CD8-positive, alpha-beta T cell (primary cell): ENCODE measurements at regions of chr1 and their contacts with region 1.

Region 1: DNA sequence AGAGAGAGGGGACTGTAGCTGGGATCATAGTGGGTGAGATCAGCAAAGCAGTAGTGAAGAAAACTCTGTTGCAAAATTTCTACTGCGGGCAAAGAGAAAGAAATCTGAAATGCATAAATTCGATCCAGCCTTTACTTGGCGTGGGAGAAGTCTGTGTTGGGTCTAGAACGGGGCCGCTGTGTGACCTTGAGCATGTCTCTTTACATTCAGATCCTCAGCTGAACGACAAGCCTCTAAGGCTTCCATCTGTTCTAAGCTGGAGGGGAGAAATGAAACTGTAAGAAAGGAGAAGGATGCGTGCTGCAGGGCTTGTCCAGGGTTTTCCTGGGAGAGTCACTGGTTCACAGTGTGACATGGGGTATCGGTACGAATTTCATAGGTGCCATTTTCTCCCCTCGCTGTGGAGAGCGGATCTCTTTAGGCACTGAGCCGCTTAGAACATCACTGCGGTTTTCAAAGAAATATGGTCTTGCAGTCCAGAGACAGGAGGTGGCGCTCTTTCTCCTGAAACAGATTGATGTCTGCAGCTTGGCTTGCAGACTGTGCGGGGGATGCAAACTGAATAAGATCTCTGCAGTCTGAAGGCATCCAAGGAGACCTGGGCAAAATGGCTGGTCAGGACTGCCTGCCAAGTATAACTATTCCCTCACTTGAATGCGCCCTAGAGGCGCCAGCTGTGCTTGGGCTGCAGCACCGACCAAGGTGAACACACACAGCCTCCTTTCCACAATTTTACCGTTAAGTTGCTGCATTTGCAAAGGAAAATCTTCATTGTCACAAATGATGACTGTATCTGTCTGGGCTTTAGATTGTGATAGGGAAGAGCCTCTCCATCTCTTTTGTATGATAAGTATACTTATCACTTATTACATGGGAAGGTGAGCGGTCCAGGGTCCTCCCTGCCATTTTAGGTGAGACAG is 104.1 kb downstream of the XCL2 start:
- DNase-seq: peak; percentile 69 to 92 (median 84)
- ATAC-seq: peak; percentile 88
- H3K4me3 ChIP-seq: peak overlapping the region; percentile 21 to 29
- H3K4me3 Mint-ChIP-seq: peak overlapping the region; percentile 83
- H3K27ac ChIP-seq: peak overlapping the region in 1 of 2 experiments; percentile 53
- H3K27ac Mint-ChIP-seq: peak overlapping the region; percentile 90
- H3K4me1 ChIP-seq: peaks cover 46% of the 10 kb centered on the region
- H3K4me1 Mint-ChIP-seq: peaks cover 58% of the 10 kb centered on the region
- H3K27me3 ChIP-seq: no peaks in the 10 kb centered on the region
- H3K27me3 Mint-ChIP-seq: no peaks in the 10 kb centered on the region
- CTCF ChIP-seq: peak; percentile 70

Region 2: DNA sequence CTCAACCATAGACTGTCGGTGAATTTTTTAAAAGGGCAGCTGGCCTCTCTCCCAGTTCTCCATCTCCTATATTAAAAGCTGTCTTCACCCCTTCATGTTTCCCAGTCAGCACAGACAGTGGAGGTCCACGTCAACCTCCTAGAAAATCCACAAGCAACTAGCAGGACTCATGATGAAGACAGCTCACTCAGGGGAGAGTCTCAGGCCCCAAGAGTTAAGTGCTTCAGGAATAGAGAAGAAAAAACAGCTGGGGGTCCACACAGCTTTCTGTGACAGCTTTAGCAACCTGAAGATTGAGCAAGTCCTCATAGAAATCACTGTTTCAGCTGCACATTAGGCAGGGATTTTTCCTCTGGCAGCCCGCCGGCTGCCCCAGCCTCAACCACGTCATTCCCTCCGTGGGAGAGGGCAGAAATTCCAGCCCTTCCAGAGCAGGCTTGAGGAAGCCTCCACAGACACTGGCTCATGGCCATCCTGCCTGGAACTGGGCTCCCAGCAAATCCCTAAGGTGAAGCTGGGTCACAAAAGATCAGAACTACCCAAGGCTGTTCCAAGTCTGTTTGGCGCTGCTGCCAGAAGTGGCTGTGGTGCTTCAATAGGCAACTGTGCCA is 318.2 kb before region 1 on chr1:
- CTCF ChIA-PET with region 1: no interaction called
- POLR2A ChIA-PET with region 1: no interaction called
- intact Hi-C with region 1: no loop called
- DNase-seq: no peak
- ATAC-seq: no peak
- H3K4me3 ChIP-seq: no peak overlapping the region
- H3K4me3 Mint-ChIP-seq: no peak overlapping the region
- H3K27ac ChIP-seq: no peak overlapping the region
- H3K27ac Mint-ChIP-seq: no peak overlapping the region
- H3K4me1 ChIP-seq: no peaks in the 10 kb centered on the region
- H3K4me1 Mint-ChIP-seq: no peaks in the 10 kb centered on the region
- H3K27me3 ChIP-seq: no peaks in the 10 kb centered on the region
- H3K27me3 Mint-ChIP-seq: peaks cover 33% of the 10 kb centered on the region
- CTCF ChIP-seq: no peak

Region 3: GRCh38 chr1:168360151-168361021 is 79.3 kb before region 1 on chr1:
- CTCF ChIA-PET with region 1: interaction called, 3 read pairs
- POLR2A ChIA-PET with region 1: no interaction called
- intact Hi-C with region 1: loop called in 1 of 2 experiments (anchors 2 kb)
- DNase-seq: peak in 3 of 9 experiments; percentile 14 to 52 (median 46)
- ATAC-seq: no peak
- H3K4me3 ChIP-seq: no peak overlapping the region
- H3K4me3 Mint-ChIP-seq: no peak overlapping the region
- H3K27ac ChIP-seq: no peak overlapping the region
- H3K27ac Mint-ChIP-seq: no peak overlapping the region
- H3K4me1 ChIP-seq: peaks cover 24% of the 10 kb centered on the region
- H3K4me1 Mint-ChIP-seq: peaks cover 33% of the 10 kb centered on the region
- H3K27me3 ChIP-seq: no peaks in the 10 kb centered on the region
- H3K27me3 Mint-ChIP-seq: no peaks in the 10 kb centered on the region
- CTCF ChIP-seq: no peak

Region 4: DNA sequence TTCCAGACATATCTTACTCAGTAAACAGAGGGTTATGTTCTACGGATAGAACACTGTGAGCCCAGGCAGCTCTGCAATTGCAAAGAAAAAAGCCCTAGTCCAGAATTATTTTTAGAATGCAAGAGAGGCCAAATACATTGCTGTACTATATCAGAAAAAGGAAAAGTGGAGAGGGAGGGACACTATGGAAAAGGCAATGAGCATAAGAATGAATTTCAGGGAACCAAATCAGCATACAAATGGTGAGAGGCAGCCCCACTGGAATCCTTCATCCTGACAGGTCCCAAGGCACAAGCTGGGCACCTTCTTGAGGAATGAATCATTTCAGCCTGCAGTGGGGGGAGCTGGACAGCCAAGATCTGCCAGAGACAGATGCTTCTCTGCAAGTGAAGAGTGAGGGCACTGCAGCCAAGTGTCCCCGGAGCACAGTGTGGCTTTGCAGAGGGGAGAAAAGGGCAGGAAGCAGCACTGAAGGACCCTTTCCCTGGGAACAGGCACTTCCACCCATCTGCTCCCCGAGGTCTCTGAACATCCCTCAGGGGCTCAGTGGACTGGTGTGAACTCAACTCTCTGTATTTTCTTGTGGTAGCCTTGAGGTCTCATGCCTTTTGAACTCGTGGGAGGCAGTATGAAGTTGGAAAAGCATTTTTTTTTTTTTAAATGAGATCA is 11.5 kb before region 1 on chr1:
- CTCF ChIA-PET with region 1: interaction called, 25 read pairs
- POLR2A ChIA-PET with region 1: no interaction called
- intact Hi-C with region 1: no loop called
- DNase-seq: no peak
- ATAC-seq: no peak
- H3K4me3 ChIP-seq: no peak overlapping the region
- H3K4me3 Mint-ChIP-seq: no peak overlapping the region
- H3K27ac ChIP-seq: no peak overlapping the region
- H3K27ac Mint-ChIP-seq: no peak overlapping the region
- H3K4me1 ChIP-seq: no peaks in the 10 kb centered on the region
- H3K4me1 Mint-ChIP-seq: peaks cover 3% of the 10 kb centered on the region
- H3K27me3 ChIP-seq: no peaks in the 10 kb centered on the region
- H3K27me3 Mint-ChIP-seq: no peaks in the 10 kb centered on the region
- CTCF ChIP-seq: no peak

Region 5: GRCh38 chr1:168509875-168510791 is 70.4 kb after region 1 on chr1:
- CTCF ChIA-PET with region 1: interaction called, 4 read pairs
- POLR2A ChIA-PET with region 1: interaction called, 5 read pairs
- intact Hi-C with region 1: loop called in 1 of 2 experiments (anchors 5 kb)
- DNase-seq: peak in 5 of 9 experiments; percentile 18 to 88 (median 63)
- ATAC-seq: peak; percentile 57
- H3K4me3 ChIP-seq: no peak overlapping the region
- H3K4me3 Mint-ChIP-seq: peak overlapping the region; percentile 4
- H3K27ac ChIP-seq: peak overlapping the region in 1 of 2 experiments; percentile 65
- H3K27ac Mint-ChIP-seq: peak overlapping the region; percentile 84
- H3K4me1 ChIP-seq: peaks cover 56% of the 10 kb centered on the region
- H3K4me1 Mint-ChIP-seq: peaks cover 72% of the 10 kb centered on the region
- H3K27me3 ChIP-seq: no peaks in the 10 kb centered on the region
- H3K27me3 Mint-ChIP-seq: no peaks in the 10 kb centered on the region
- CTCF ChIP-seq: no peak

Region 6: DNA sequence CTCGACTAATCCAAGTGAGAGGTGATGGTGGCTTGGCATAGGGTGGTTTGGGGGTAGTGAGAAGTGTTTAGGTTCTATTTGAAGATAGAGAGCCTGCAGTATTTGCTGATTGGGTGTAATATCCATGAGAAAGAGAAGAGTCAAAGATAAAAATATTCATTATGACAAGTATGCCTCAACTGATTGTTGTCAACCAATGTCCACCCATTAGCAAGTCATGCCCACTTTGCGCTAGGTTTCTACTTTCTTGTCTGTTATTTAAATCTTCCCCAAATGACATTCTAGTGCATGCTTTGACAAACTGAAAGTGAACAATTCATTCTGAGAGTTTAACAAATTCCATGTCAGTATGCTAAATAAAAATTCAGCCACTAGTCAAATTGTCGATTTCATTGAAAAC is 132.9 kb after region 1 on chr1:
- CTCF ChIA-PET with region 1: interaction called, 12 read pairs
- POLR2A ChIA-PET with region 1: interaction called, 6 read pairs
- intact Hi-C with region 1: loop called (anchors 1 kb)
- DNase-seq: no peak
- ATAC-seq: no peak
- H3K4me3 ChIP-seq: no peak overlapping the region
- H3K4me3 Mint-ChIP-seq: no peak overlapping the region
- H3K27ac ChIP-seq: no peak overlapping the region
- H3K27ac Mint-ChIP-seq: no peak overlapping the region
- H3K4me1 ChIP-seq: peaks cover 3% of the 10 kb centered on the region
- H3K4me1 Mint-ChIP-seq: peaks cover 26% of the 10 kb centered on the region
- H3K27me3 ChIP-seq: no peaks in the 10 kb centered on the region
- H3K27me3 Mint-ChIP-seq: no peaks in the 10 kb centered on the region
- CTCF ChIP-seq: no peak

Region 7: GRCh38 chr1:168879916-168880734 is 440.4 kb after region 1 on chr1:
- CTCF ChIA-PET with region 1: no interaction called
- POLR2A ChIA-PET with region 1: no interaction called
- intact Hi-C with region 1: loop called in 1 of 2 experiments (anchors 2 kb)
- DNase-seq: no peak
- ATAC-seq: no peak
- H3K4me3 ChIP-seq: no peak overlapping the region
- H3K4me3 Mint-ChIP-seq: no peak overlapping the region
- H3K27ac ChIP-seq: no peak overlapping the region
- H3K27ac Mint-ChIP-seq: no peak overlapping the region
- H3K4me1 ChIP-seq: no peaks in the 10 kb centered on the region
- H3K4me1 Mint-ChIP-seq: peaks cover 3% of the 10 kb centered on the region
- H3K27me3 ChIP-seq: no peaks in the 10 kb centered on the region
- H3K27me3 Mint-ChIP-seq: peaks cover 2% of the 10 kb centered on the region
- CTCF ChIP-seq: no peak

Region 8: DNA sequence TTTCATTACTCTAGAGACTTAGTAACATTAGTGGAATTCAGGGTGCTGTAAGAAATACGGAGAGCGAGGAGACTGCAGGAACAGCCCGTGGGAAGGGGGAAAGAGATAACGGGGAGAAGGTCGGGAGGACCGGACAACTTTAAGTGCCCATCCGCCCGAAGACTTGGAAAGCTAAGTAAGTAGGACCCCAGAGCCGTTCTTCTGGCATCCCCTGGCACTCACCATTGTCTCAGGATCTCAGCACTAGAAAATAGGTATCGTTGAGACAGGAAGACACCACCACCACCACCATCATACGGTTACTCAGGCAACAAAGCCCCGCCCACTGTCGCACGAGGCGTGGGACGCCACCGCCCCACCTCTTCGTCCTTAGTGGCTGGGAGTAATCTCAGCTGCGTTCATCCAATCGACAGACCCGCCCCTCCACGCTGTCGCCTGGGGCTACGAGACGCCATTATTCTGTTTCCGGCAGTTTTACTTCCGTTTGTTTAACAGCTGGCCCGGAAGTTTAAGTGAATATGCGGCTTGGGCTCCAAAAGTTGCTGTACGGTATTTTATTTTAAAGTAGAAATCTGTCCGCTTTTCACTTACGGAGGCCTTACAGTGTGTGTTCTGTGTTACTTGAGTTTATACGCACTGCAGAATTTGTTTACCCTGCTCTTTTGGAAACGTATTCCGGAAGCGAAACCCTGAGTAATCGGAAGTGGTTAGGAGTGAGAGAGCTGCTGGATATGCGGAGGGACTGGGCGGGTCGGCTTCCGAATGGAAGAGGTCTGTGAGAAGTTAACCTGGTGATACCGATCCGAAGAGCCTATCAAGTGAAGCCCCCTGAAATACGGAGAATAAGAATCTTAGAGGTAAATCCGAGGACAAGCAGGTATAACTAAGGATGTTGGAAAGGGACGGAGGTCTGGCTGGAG is 928.0 kb after region 1 on chr1 and contains the starts of genes BLZF1 and NME7:
- CTCF ChIA-PET with region 1: interaction called, 3 read pairs
- POLR2A ChIA-PET with region 1: no interaction called
- intact Hi-C with region 1: loop called in 1 of 2 experiments (anchors 5 kb)
- DNase-seq: peak; percentile 96 to 99 (median 98)
- ATAC-seq: peak; percentile 93
- H3K4me3 ChIP-seq: peak within 1 kb of the TSS; percentile 84 to 94
- H3K4me3 Mint-ChIP-seq: peak within 1 kb of the TSS; percentile 51
- H3K27ac ChIP-seq: peak within 1 kb of the TSS; percentile 88 to 97
- H3K27ac Mint-ChIP-seq: peak within 1 kb of the TSS; percentile 32
- H3K4me1 ChIP-seq: peaks cover 23% of the 10 kb centered on the region
- H3K4me1 Mint-ChIP-seq: peaks cover 49% of the 10 kb centered on the region
- H3K27me3 ChIP-seq: no peaks in the 10 kb centered on the region
- H3K27me3 Mint-ChIP-seq: no peaks in the 10 kb centered on the region
- CTCF ChIP-seq: no peak
- total RNA-seq, gene BLZF1: 11.1 to 13.6 TPM
- total RNA-seq, gene NME7: 5.3 to 7.7 TPM